Activated naive CD4-positive, alpha-beta T cell treated with anti-CD3 and anti-CD28 coated beads for 36 hours (primary cell): ENCODE measurements at regions of chr6 and their contacts with region 1.

Region 1: DNA sequence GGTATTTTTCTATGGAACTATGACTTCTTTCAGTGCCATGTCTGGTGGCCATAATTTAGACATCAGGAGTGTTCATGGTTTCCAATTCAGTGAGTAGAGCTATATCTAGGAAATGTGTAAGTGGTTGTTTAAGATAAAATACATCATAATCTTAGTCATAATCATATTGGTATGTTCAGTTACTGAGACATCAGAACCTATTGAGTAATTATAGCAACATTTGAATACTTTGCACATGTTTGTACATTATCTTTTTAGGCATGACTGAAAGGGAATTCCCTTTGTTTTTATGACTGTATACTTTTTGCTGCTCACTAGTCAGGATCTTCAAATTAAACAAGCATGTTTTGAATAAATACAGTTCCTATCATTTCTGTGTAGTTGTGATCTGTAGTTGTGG is 64.0 kb downstream of the STXBP5 start:
- DNase-seq: no peak
- H3K4me3 Mint-ChIP-seq: no peak overlapping the region
- H3K27ac Mint-ChIP-seq: peak overlapping the region; percentile 83
- H3K4me1 Mint-ChIP-seq: peaks cover 17% of the 10 kb centered on the region
- H3K27me3 Mint-ChIP-seq: no peaks in the 10 kb centered on the region

Region 2: GRCh38 chr6:146850238-146850896 is 417.9 kb before region 1 on chr6:
- CTCF ChIA-PET with region 1: no interaction called
- intact Hi-C with region 1: loop called (anchors 1 kb)
- DNase-seq: peak; percentile 72
- H3K4me3 Mint-ChIP-seq: no peak overlapping the region
- H3K27ac Mint-ChIP-seq: peak overlapping the region; percentile 71
- H3K4me1 Mint-ChIP-seq: peaks cover 31% of the 10 kb centered on the region
- H3K27me3 Mint-ChIP-seq: peaks cover 7% of the 10 kb centered on the region

Region 3: GRCh38 chr6:147227770-147228320 is 40.4 kb before region 1 on chr6:
- CTCF ChIA-PET with region 1: no interaction called
- intact Hi-C with region 1: no loop called
- DNase-seq: peak; percentile 12
- H3K4me3 Mint-ChIP-seq: no peak overlapping the region
- H3K27ac Mint-ChIP-seq: no peak overlapping the region
- H3K4me1 Mint-ChIP-seq: peaks cover 21% of the 10 kb centered on the region
- H3K27me3 Mint-ChIP-seq: no peaks in the 10 kb centered on the region